Dendritic cell treated with granulocyte-macrophage colony-stimulating factor and Interleukin-4, amounts not matched to agents 40 ng/mL and 50 ng/mL, for 4 days (primary cell): ENCODE measurements at regions of chr3 and their contacts with region 1.

Region 1: GRCh38 chr3:127697551-127698240 is 24.9 kb downstream of the ABTB1 start:
- H3K4me3 Mint-ChIP-seq: no peak overlapping the region
- H3K27ac Mint-ChIP-seq: peak overlapping the region; percentile 78
- H3K4me1 Mint-ChIP-seq: peaks cover 25% of the 10 kb centered on the region
- H3K27me3 Mint-ChIP-seq: peaks cover 3% of the 10 kb centered on the region

Region 2: GRCh38 chr3:127775398-127776109 is 77.9 kb after region 1 on chr3:
- intact Hi-C with region 1: loop called (anchors 10 kb)
- H3K4me3 Mint-ChIP-seq: no peak overlapping the region
- H3K27ac Mint-ChIP-seq: peak overlapping the region; percentile 68
- H3K4me1 Mint-ChIP-seq: peaks cover 81% of the 10 kb centered on the region
- H3K27me3 Mint-ChIP-seq: peaks cover 15% of the 10 kb centered on the region

Region 3: DNA sequence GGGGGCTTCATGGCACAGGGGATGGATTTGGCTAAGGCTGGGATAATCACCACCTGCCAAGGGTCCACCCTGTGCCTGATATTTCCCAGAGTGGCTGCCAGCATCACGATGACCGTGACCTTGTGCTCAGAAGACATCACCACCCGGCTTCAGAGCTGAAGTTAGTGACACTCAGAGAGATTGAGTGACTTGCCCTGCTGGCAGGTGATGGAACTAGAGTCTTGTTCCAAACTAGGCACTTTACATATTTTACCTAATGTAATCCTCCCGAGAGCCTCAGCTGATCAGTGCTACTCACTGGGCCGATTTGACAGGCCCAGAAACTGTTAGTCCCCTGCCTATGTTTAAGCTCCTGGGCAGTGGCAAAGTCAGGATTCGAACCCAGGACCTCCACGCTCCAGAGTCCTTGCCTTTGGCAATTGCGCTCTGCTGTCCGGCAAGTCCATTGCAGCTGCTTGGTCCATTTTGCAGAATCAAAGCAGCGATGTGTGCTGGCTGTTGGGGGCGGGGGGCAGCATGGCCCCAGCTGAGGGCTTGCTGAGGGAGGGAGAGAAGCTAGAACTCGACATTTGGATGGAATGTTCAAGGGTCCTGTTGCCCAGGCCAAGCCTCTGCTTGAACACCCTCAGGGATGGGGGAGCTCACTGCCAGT is 870.1 kb after region 1 on chr3:
- intact Hi-C with region 1: no loop called
- H3K4me3 Mint-ChIP-seq: no peak overlapping the region
- H3K27ac Mint-ChIP-seq: no peak overlapping the region
- H3K4me1 Mint-ChIP-seq: no peaks in the 10 kb centered on the region
- H3K27me3 Mint-ChIP-seq: peaks cover 19% of the 10 kb centered on the region